Naive thymus-derived CD4-positive, alpha-beta T cell (primary cell): ENCODE measurements at regions of chr6 and their contacts with region 1.

Region 1: GRCh38 chr6:26097268-26097875 is 10.1 kb downstream of the HFE start:
- DNase-seq: peak; percentile 23 to 75 (median 61)
- ATAC-seq: peak; percentile 92
- H3K4me3 ChIP-seq: no peak overlapping the region
- H3K4me3 Mint-ChIP-seq: no peak overlapping the region
- H3K27ac ChIP-seq: no peak overlapping the region
- H3K27ac Mint-ChIP-seq: no peak overlapping the region
- H3K4me1 ChIP-seq: no peaks in the 10 kb centered on the region
- H3K4me1 Mint-ChIP-seq: peaks cover 4 to 13% (median 8%) of the 10 kb centered on the region in 7 donors
- H3K27me3 ChIP-seq: no peaks in the 10 kb centered on the region
- H3K27me3 Mint-ChIP-seq: peaks cover 0 to 9% (median 0%) of the 10 kb centered on the region in 5 donors

Region 2: GRCh38 chr6:26071135-26071534 is 26.2 kb before region 1 on chr6:
- CTCF ChIA-PET with region 1: interaction called, 232 read pairs
- POLR2A ChIA-PET with region 1: interaction called, 298 read pairs
- intact Hi-C with region 1: loop called in 1 of 2 experiments (anchors 1 kb)
- DNase-seq: no peak
- ATAC-seq: no peak
- H3K4me3 ChIP-seq: no peak overlapping the region
- H3K4me3 Mint-ChIP-seq: no peak overlapping the region
- H3K27ac ChIP-seq: no peak overlapping the region
- H3K27ac Mint-ChIP-seq: no peak overlapping the region
- H3K4me1 ChIP-seq: no peaks in the 10 kb centered on the region
- H3K4me1 Mint-ChIP-seq: peaks cover 0 to 7% (median 0%) of the 10 kb centered on the region in 7 donors
- H3K27me3 ChIP-seq: no peaks in the 10 kb centered on the region
- H3K27me3 Mint-ChIP-seq: peaks cover 0 to 31% (median 3%) of the 10 kb centered on the region in 5 donors